ENCODE measurements at regions of chr3 and their contacts with region 1.

Region 1: GRCh38 chr3:113825090-113825489 is 13.5 kb upstream of the GRAMD1C start:
- DNase-seq: no peak
- H3K4me3 ChIP-seq: no peak overlapping the region
- H3K27ac ChIP-seq: no peak overlapping the region
- H3K4me1 ChIP-seq: peaks cover 0 to 4% (median 0%) of the 10 kb centered on the region in 4 experiments; a peak in 1 of 7 replicates
- H3K27me3 ChIP-seq: no peaks in the 10 kb centered on the region
- CTCF ChIP-seq: peak in 1 of 3 experiments; percentile 52; a peak in 1 of 4 replicates
- EP300 ChIP-seq: no peak
- POLR2A ChIP-seq: no peak
- RAD21 ChIP-seq: peak in 1 of 2 experiments; percentile 26; a peak in 2 of 4 replicates

Region 2: GRCh38 chr3:113514265-113514769 is 310.8 kb before region 1 on chr3:
- CTCF ChIA-PET with region 1: no interaction called
- POLR2A ChIA-PET with region 1: no interaction called
- DNase-seq: no peak
- H3K4me3 ChIP-seq: peak overlapping the region; percentile 86 to 95 (median 93)
- H3K27ac ChIP-seq: no peak overlapping the region; the same call in 1 of the 2 replicates
- H3K4me1 ChIP-seq: no peaks in the 10 kb centered on the region; a peak in 2 of 7 replicates
- H3K27me3 ChIP-seq: peaks cover 0 to 4% (median under 1%) of the 10 kb centered on the region in 4 experiments; a peak in 2 of 7 replicates
- CTCF ChIP-seq: no peak
- EP300 ChIP-seq: no peak
- POLR2A ChIP-seq: no peak
- RAD21 ChIP-seq: no peak

Region 3: DNA sequence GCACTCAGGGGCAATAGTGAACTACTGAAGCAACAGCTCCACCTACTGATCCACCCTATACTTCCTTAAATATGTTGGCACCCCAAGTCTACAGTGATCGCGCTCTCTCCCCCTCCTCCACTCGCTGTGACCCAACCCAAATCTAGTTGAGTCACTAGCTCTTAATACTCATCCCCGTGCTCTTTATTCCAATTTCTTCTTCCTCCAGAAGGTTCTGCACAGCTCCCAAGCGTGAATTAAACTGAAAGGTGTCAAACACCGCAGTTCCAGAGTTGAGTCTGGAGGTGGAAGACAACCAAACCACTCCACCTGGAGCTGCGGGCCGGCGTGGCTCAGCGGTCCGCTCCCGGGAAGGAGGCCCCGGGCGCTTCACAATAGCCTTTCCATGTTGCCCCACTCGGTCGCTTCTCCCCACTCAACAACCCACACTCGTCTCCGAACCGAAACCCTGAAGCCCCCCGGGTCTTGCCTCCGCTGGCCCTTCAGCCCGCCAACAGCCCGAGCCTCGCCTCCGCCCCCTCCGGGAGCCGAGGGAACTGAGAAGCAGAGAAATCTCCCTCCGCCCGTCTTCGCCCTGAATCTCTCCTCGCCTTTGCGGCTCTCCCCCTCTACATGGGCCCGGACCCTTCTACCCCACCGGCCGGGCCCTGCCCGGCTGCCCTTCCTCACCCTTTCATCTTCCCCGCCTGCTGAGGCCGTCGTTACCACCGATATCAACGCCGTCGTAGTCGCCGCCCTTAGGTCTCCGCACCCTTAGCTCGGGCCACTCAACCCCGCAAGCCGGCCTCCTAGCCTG is 79.6 kb before region 1 on chr3:
- CTCF ChIA-PET with region 1: interaction called, 10 read pairs
- POLR2A ChIA-PET with region 1: interaction called, 3 read pairs
- DNase-seq: peak; percentile 34 to 82
- H3K4me3 ChIP-seq: peak overlapping the region; percentile 95 to 100 (median 98)
- H3K27ac ChIP-seq: peak overlapping the region; percentile 99
- H3K4me1 ChIP-seq: peaks cover 0 to 6% (median 2%) of the 10 kb centered on the region in 4 experiments; a peak in 4 of 7 replicates
- H3K27me3 ChIP-seq: no peaks in the 10 kb centered on the region
- CTCF ChIP-seq: peak; percentile 48 to 83 (median 82)
- EP300 ChIP-seq: no peak
- POLR2A ChIP-seq: peak; percentile 33 to 82
- RAD21 ChIP-seq: peak; percentile 71 to 80

Region 4: GRCh38 chr3:113812854-113813253 is 12.2 kb before region 1 on chr3:
- CTCF ChIA-PET with region 1: interaction called, 17 read pairs
- POLR2A ChIA-PET with region 1: interaction called, 4 read pairs
- DNase-seq: no peak
- H3K4me3 ChIP-seq: no peak overlapping the region
- H3K27ac ChIP-seq: no peak overlapping the region
- H3K4me1 ChIP-seq: no peaks in the 10 kb centered on the region; a peak in 1 of 7 replicates
- H3K27me3 ChIP-seq: no peaks in the 10 kb centered on the region
- CTCF ChIP-seq: no peak
- EP300 ChIP-seq: no peak
- POLR2A ChIP-seq: no peak
- RAD21 ChIP-seq: no peak

Region 5: GRCh38 chr3:113838631-113839209 is 13.6 kb after region 1 on chr3 and contains the start of gene GRAMD1C:
- CTCF ChIA-PET with region 1: interaction called, 16 read pairs
- POLR2A ChIA-PET with region 1: no interaction called
- DNase-seq: peak; percentile 72 to 90
- H3K4me3 ChIP-seq: peak within 1 kb of the TSS; percentile 46 to 83 (median 73)
- H3K27ac ChIP-seq: no peak within 1 kb of the TSS
- H3K4me1 ChIP-seq: no peaks in the 10 kb centered on the region
- H3K27me3 ChIP-seq: no peaks in the 10 kb centered on the region
- CTCF ChIP-seq: peak; percentile 85 to 92 (median 88)
- EP300 ChIP-seq: no peak
- POLR2A ChIP-seq: no peak
- RAD21 ChIP-seq: peak; percentile 75 to 87
- total RNA-seq, gene GRAMD1C: 1.3 and 2.1 TPM in 2 replicates